Dendritic cell treated with granulocyte-macrophage colony-stimulating factor and Interleukin-4, amounts not matched to agents 40 ng/mL and 50 ng/mL, for 4 days (primary cell): ENCODE measurements at regions of chr17 and their contacts with region 1.

Region 1: DNA sequence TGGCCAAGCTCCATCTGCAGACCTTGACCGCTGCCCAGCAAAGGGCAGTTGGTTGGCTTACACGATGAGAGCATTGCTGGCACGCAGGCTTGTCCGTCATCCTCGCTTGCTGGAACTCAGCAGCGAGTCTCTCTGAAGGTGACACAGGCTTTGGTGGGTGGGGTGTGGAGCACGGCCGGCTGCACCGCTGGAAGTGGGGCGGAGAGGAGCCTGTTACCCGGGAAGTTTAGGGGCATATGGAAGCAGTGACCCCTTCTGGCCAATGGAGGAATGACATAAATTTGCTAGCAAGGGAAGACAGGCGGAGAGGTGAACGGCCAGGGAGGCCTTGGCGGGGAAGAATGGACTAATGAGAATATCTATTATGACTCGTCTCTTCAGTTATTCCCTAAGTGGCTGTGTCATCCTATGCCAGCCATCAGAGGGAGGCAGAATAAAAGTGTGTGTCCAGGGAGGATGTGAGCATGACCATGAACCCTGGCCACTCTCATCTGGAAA is 65.9 kb upstream of the SDK2 start:
- H3K4me3 Mint-ChIP-seq: no peak overlapping the region
- H3K27ac Mint-ChIP-seq: no peak overlapping the region
- H3K4me1 Mint-ChIP-seq: peaks cover 26% of the 10 kb centered on the region
- H3K27me3 Mint-ChIP-seq: peaks cover 44% of the 10 kb centered on the region

Region 2: GRCh38 chr17:73650140-73650539 is 60.0 kb before region 1 on chr17:
- intact Hi-C with region 1: loop called (anchors 5 kb)
- H3K4me3 Mint-ChIP-seq: no peak overlapping the region
- H3K27ac Mint-ChIP-seq: no peak overlapping the region
- H3K4me1 Mint-ChIP-seq: peaks cover 16% of the 10 kb centered on the region
- H3K27me3 Mint-ChIP-seq: peaks cover 47% of the 10 kb centered on the region